ENCODE measurements at regions of chr11 and their contacts with region 1.

Region 1: GRCh38 chr11:92050305-92050704 is 174.3 kb upstream of the FAT3 start:
- DNase-seq: no peak
- H3K4me3 ChIP-seq: no peak overlapping the region
- H3K27ac ChIP-seq: no peak overlapping the region
- H3K4me1 ChIP-seq: no peaks in the 10 kb centered on the region
- H3K27me3 ChIP-seq: no peaks in the 10 kb centered on the region
- CTCF ChIP-seq: no peak
- POLR2A ChIP-seq: no peak

Region 2: GRCh38 chr11:91365986-91366585 is 684.2 kb before region 1 on chr11:
- intact Hi-C with region 1: loop called (anchors 10 kb)
- DNase-seq: no peak
- H3K4me3 ChIP-seq: no peak overlapping the region
- H3K27ac ChIP-seq: no peak overlapping the region
- H3K4me1 ChIP-seq: no peaks in the 10 kb centered on the region
- H3K27me3 ChIP-seq: no peaks in the 10 kb centered on the region
- CTCF ChIP-seq: no peak
- POLR2A ChIP-seq: no peak

Region 3: GRCh38 chr11:92152245-92152644 is 101.9 kb after region 1 on chr11:
- intact Hi-C with region 1: no loop called
- DNase-seq: no peak
- H3K4me3 ChIP-seq: no peak overlapping the region
- H3K27ac ChIP-seq: no peak overlapping the region
- H3K4me1 ChIP-seq: no peaks in the 10 kb centered on the region
- H3K27me3 ChIP-seq: no peaks in the 10 kb centered on the region
- CTCF ChIP-seq: no peak
- POLR2A ChIP-seq: no peak